ENCODE measurements at regions of chr1 and their contacts with region 1.

Region 1: DNA sequence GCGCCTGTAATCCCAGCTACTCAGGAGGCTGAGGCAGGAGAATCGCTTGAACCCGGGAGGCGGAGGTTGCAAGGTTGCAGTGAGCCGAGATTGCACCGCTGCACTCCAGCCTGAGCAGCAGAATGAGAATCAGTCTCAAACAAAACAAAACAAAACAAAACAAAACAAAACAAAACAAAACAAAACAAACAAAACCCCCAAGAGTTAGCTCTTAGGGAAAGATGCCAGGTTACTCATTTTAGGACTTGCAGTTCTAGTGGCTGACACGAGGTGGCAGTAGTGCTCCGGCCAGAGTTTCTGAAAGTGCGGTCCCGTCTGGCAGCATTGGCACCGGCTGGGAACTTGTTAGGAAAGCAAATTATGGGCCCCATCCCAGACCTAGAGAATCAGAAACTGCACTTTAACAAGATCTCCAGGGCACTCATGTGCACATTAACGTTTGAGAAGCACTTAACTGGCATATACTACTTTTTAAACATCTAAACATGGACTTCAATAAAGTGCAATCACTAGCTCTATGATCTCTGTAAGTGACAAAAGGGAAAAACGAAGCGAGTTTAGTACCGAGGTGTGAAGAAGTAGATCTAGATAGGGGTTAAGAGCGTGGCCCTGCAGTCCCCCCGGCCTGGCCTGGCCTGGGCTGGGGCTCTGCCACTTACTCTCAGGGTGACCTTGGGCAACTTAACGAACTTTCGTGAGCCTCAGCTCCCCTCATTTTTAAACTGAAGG is 41.9 kb upstream of the TNFRSF1B start:
- DNase-seq: peak; percentile 86
- H3K4me3 Mint-ChIP-seq: no peak overlapping the region
- H3K27ac Mint-ChIP-seq: peak overlapping the region; percentile 42
- H3K4me1 Mint-ChIP-seq: peaks cover 52% of the 10 kb centered on the region
- H3K27me3 Mint-ChIP-seq: no peaks in the 10 kb centered on the region

Region 2: GRCh38 chr1:12113433-12114339 is 11.2 kb before region 1 on chr1:
- CTCF ChIA-PET with region 1: interaction called, 14 read pairs
- POLR2A ChIA-PET with region 1: no interaction called
- intact Hi-C with region 1: no loop called
- DNase-seq: no peak
- H3K4me3 Mint-ChIP-seq: no peak overlapping the region
- H3K27ac Mint-ChIP-seq: no peak overlapping the region
- H3K4me1 Mint-ChIP-seq: peaks cover 5% of the 10 kb centered on the region
- H3K27me3 Mint-ChIP-seq: no peaks in the 10 kb centered on the region

Region 3: DNA sequence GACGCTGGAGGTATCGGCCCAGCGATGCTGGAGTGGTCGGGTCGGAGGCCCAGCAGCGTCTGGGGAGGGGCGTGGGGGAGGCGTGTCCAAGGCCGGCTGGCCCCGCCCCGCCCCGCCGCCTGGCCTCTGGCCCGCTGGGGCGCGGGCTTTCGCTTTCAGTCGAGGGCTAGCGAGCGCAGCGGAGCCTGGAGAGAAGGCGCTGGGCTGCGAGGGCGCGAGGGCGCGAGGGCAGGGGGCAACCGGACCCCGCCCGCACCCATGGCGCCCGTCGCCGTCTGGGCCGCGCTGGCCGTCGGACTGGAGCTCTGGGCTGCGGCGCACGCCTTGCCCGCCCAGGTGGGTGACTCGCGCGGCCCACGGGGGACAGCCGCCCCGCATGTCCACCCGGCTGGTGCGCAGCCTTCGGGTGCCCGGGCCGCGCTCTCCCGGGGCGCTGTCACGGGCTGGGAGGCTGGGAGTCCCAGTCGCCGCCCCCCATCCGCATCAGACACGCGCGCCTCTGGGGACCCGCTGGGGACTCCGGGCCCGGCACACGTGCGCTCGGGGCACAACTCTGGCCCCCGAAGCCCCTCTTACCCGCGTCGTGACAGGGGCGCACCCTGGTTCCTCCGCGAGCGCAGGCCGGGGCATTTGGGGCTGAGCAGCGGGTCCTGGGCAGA is 42.1 kb after region 1 on chr1 and contains the start of gene TNFRSF1B:
- CTCF ChIA-PET with region 1: interaction called, 29 read pairs
- POLR2A ChIA-PET with region 1: interaction called, 5 read pairs
- intact Hi-C with region 1: no loop called
- DNase-seq: peak; percentile 80
- H3K4me3 Mint-ChIP-seq: peak within 1 kb of the TSS; percentile 98
- H3K27ac Mint-ChIP-seq: peak within 1 kb of the TSS; percentile 97
- H3K4me1 Mint-ChIP-seq: peaks cover 66% of the 10 kb centered on the region
- H3K27me3 Mint-ChIP-seq: no peaks in the 10 kb centered on the region
- total RNA-seq, gene TNFRSF1B: 201 to 211 TPM

Region 4: GRCh38 chr1:12196641-12197482 is 72.0 kb after region 1 on chr1:
- CTCF ChIA-PET with region 1: interaction called, 369 read pairs
- POLR2A ChIA-PET with region 1: interaction called, 4 read pairs
- intact Hi-C with region 1: no loop called
- DNase-seq: no peak
- H3K4me3 Mint-ChIP-seq: no peak overlapping the region
- H3K27ac Mint-ChIP-seq: peak overlapping the region; percentile 38
- H3K4me1 Mint-ChIP-seq: peaks cover 36% of the 10 kb centered on the region
- H3K27me3 Mint-ChIP-seq: no peaks in the 10 kb centered on the region

Region 5: GRCh38 chr1:12229835-12230548 is 105.1 kb after region 1 on chr1 and contains the start of gene VPS13D:
- CTCF ChIA-PET with region 1: interaction called, 44 read pairs
- POLR2A ChIA-PET with region 1: no interaction called
- intact Hi-C with region 1: no loop called
- DNase-seq: peak; percentile 87
- H3K4me3 Mint-ChIP-seq: peak within 1 kb of the TSS; percentile 81
- H3K27ac Mint-ChIP-seq: peak within 1 kb of the TSS; percentile 45
- H3K4me1 Mint-ChIP-seq: peaks cover 23% of the 10 kb centered on the region
- H3K27me3 Mint-ChIP-seq: no peaks in the 10 kb centered on the region
- total RNA-seq, gene VPS13D: 25.0 to 25.4 TPM

Region 6: GRCh38 chr1:12275369-12275768 is 150.5 kb after region 1 on chr1:
- CTCF ChIA-PET with region 1: interaction called, 18 read pairs
- POLR2A ChIA-PET with region 1: no interaction called
- intact Hi-C with region 1: no loop called
- DNase-seq: peak; percentile 63
- H3K4me3 Mint-ChIP-seq: no peak overlapping the region
- H3K27ac Mint-ChIP-seq: no peak overlapping the region
- H3K4me1 Mint-ChIP-seq: no peaks in the 10 kb centered on the region
- H3K27me3 Mint-ChIP-seq: no peaks in the 10 kb centered on the region

Region 7: GRCh38 chr1:12342401-12343003 is 217.6 kb after region 1 on chr1:
- CTCF ChIA-PET with region 1: no interaction called
- POLR2A ChIA-PET with region 1: no interaction called
- intact Hi-C with region 1: no loop called
- DNase-seq: no peak
- H3K4me3 Mint-ChIP-seq: no peak overlapping the region
- H3K27ac Mint-ChIP-seq: no peak overlapping the region
- H3K4me1 Mint-ChIP-seq: peaks cover 54% of the 10 kb centered on the region
- H3K27me3 Mint-ChIP-seq: no peaks in the 10 kb centered on the region

Measured in activated CD4-positive, alpha-beta memory T cell treated with anti-CD3 and anti-CD28 coated beads for 36 hours (primary cell).